Tibial artery (tissue), 4 donors: ENCODE measurements at regions of chr3 and their contacts with region 1.

Region 1: GRCh38 chr3:194003125-194004057 is 132.6 kb upstream of the HES1 start:
- DNase-seq: peak; percentile 96 to 98
- H3K4me3 ChIP-seq: peak overlapping the region; percentile 36 to 48
- H3K27ac ChIP-seq: peak overlapping the region; percentile 60 to 85
- H3K4me1 ChIP-seq: peaks cover 5 to 28% (median 19%) of the 10 kb centered on the region in 4 donors
- H3K27me3 ChIP-seq: peaks cover 0 to 22% of the 10 kb centered on the region in 2 donors
- CTCF ChIP-seq: no peak

Region 2: GRCh38 chr3:194064380-194065332 is 61.3 kb after region 1 on chr3:
- intact Hi-C with region 1: loop called (anchors 5 kb)
- DNase-seq: no peak
- H3K4me3 ChIP-seq: no peak overlapping the region
- H3K27ac ChIP-seq: no peak overlapping the region
- H3K4me1 ChIP-seq: no peaks in the 10 kb centered on the region
- H3K27me3 ChIP-seq: no peaks in the 10 kb centered on the region
- CTCF ChIP-seq: no peak

Region 3: DNA sequence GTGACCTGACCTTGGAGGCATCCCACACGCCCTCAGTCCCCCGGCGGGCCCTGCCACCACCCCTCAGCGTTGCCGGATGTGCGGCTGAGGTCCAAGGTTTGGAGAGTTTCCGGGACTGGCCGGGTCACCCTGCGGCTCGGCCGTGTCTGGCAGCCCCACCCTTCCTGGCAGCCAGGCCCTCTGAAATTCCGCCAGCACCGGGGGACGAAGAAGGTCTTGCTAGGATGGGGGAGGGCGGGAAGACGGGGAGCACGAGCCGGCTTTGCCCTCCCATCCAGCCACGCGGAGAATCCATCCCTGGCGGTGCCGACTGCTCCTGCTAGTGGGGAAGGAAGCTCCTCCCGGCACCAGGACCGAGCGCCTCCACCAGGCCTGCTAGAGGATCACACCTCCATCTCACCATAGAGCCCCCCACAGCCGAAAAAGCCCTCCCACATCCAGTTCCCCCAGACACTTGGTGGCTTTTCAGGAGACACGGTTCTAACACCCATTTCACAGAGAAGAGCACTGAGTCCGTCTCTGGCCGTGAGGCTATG is 266.3 kb after region 1 on chr3:
- intact Hi-C with region 1: loop called (anchors 5 kb)
- DNase-seq: peak; percentile 82 to 94
- H3K4me3 ChIP-seq: peak overlapping the region in 1 of 2 donors; percentile 6
- H3K27ac ChIP-seq: peak overlapping the region; percentile 76 to 91
- H3K4me1 ChIP-seq: peaks cover 3 to 57% (median 47%) of the 10 kb centered on the region in 4 donors
- H3K27me3 ChIP-seq: no peaks in the 10 kb centered on the region
- CTCF ChIP-seq: peak; percentile 45 to 51